Tibial artery (tissue), 4 donors: ENCODE measurements at regions of chr20 and their contacts with region 1.

Region 1: DNA sequence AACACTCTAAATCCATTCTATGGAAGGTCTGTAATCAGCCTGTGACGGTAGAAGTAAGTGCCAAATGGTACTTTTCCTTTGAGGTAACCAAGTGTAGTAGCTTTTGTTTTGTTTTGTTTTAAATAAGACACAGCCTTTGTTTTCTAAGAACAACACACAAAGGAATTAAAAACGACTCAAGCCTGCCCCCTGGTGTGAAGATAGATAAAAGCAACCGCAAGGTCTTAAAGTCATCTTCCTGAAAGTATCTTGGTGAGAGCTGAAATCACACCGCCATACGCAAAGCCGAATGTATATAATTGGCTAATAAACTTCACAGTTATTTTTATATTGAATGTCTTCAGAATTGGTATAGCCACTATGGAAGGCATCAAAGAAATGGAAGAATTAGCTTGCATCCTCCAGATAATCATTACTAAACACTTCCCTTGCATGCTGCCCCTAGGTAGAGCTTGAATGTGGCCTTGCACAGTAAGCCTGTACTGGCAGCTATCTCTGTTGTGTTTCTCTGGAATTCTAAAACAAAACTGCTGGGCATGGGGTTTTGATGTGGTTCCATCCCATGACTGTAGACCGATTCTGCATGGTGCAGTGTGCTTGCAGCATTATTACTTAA is 95.6 kb downstream of the LAMP5 start:
- DNase-seq: peak in 1 of 2 donors; percentile 40
- H3K4me3 ChIP-seq: no peak overlapping the region
- H3K27ac ChIP-seq: no peak overlapping the region
- H3K4me1 ChIP-seq: no peaks in the 10 kb centered on the region
- H3K27me3 ChIP-seq: no peaks in the 10 kb centered on the region
- CTCF ChIP-seq: peak; percentile 63 to 77

Region 2: GRCh38 chr20:9409981-9410380 is 200.0 kb before region 1 on chr20:
- intact Hi-C with region 1: loop called (anchors 2 kb)
- DNase-seq: no peak
- H3K4me3 ChIP-seq: no peak overlapping the region
- H3K27ac ChIP-seq: no peak overlapping the region
- H3K4me1 ChIP-seq: peaks cover 0 to 15% (median 4%) of the 10 kb centered on the region in 4 donors
- H3K27me3 ChIP-seq: no peaks in the 10 kb centered on the region
- CTCF ChIP-seq: no peak